ENCODE measurements at regions of chr17 and their contacts with region 1.

Region 1: DNA sequence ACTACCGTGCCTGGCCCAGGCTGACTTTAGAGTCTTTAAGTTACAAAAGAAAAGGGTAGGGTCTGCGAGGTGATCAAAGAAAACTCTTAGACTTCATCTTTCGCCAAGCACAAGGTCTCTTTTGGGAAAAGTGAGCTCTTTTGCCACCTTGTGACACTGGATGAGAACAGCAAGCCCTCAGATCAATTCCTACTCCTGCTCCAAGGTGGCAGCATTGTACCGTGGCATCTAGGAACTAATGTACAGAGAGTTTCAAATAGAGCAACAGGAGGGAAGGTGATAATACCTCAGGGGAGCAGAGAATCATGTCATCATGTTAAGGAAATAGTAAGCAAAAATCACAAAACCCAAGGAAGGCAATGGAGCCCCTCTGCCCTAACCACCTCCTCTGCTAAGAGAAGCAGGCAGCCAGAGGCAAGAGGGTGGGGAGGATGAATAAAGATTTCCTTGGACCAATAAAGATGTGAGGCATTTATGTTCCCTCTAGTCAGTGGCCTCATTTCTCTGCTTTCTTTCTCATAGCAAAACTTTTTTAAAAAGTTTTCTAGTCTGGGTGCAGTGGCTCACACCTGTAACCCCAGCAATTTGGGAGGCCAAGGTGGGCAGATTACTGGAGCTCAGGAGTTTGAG is 2.1 kb upstream of the C17orf78 start:
- DNase-seq: peak; percentile 76
- ATAC-seq: peak; percentile 98
- H3K4me3 ChIP-seq: no peak overlapping the region
- H3K27ac ChIP-seq: no peak overlapping the region
- H3K4me1 ChIP-seq: peaks cover 0 to 5% of the 10 kb centered on the region in 2 experiments; a peak in 2 of 4 replicates
- H3K27me3 ChIP-seq: no peaks in the 10 kb centered on the region
- CTCF ChIP-seq: peak; percentile 99 to 100 (median 100)
- POLR2A ChIP-seq: no peak
- RAD21 ChIP-seq: peak; percentile 99

Region 2: GRCh38 chr17:37276527-37276926 is 97.1 kb before region 1 on chr17:
- CTCF ChIA-PET with region 1: no interaction called
- POLR2A ChIA-PET with region 1: no interaction called
- RAD21 ChIA-PET with region 1: no interaction called
- intact Hi-C with region 1: no loop called
- DNase-seq: no peak
- ATAC-seq: no peak
- H3K4me3 ChIP-seq: no peak overlapping the region
- H3K27ac ChIP-seq: peak overlapping the region; percentile 16; the same call in 1 of the 2 replicates
- H3K4me1 ChIP-seq: peaks cover 10 to 24% of the 10 kb centered on the region in 2 experiments; a peak in 3 of 4 replicates
- H3K27me3 ChIP-seq: no peaks in the 10 kb centered on the region
- CTCF ChIP-seq: no peak
- POLR2A ChIP-seq: no peak
- RAD21 ChIP-seq: no peak

Region 3: DNA sequence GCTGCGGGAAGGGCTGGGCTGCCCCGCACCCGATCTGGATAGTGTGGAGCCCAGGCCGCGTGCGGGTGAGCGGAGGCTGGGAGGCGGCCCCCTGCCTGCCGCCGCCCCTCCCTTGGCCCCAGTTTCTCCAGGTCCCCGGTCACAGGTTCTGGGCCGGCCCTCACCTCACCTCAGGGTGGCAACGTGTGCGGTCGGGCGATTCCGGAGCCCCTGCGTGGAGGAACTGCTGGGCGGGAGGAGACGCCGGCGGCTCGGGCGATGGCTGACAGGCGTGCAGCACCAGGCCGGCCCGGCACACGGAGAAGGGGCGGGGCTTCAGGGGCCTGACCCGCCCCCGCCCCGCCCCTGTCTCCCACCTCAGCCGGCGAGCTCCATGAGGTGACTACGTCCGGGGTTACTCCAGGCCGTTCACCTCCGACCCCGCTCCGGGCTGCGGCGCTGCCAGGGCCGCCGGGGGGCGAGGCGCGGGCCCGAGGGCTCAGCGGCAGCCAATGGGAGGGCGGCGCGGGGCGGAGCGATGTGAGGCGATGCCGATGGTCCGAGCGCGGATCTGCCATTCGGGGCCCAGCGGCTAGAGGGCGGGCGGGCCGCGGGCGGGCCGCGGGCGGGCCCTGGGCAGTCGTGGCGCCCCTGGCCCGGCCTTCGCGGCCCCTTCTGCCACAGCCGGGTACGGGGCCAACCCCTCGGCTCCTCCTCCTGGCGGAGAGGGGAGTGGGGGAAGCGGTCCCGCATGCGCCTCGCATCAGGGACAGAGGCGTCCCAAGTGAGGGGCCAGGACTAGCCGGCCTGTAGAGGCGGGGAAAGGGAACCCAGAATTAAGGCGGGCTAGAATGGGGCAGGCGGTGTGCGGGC is 14.6 kb before region 1 on chr17:
- CTCF ChIA-PET with region 1: interaction called, 32 read pairs
- POLR2A ChIA-PET with region 1: interaction called, 11 read pairs
- RAD21 ChIA-PET with region 1: no interaction called
- intact Hi-C with region 1: no loop called
- DNase-seq: peak; percentile 86
- ATAC-seq: peak; percentile 95
- H3K4me3 ChIP-seq: peak overlapping the region; percentile 93 to 96
- H3K27ac ChIP-seq: peak overlapping the region; percentile 86
- H3K4me1 ChIP-seq: peaks cover 29 to 32% of the 10 kb centered on the region in 2 experiments
- H3K27me3 ChIP-seq: no peaks in the 10 kb centered on the region
- CTCF ChIP-seq: no peak
- POLR2A ChIP-seq: peak; percentile 25
- RAD21 ChIP-seq: no peak

Region 4: GRCh38 chr17:37392024-37392590 is 18.5 kb after region 1 on chr17:
- CTCF ChIA-PET with region 1: interaction called, 19 read pairs
- POLR2A ChIA-PET with region 1: interaction called, 3 read pairs
- RAD21 ChIA-PET with region 1: no interaction called
- intact Hi-C with region 1: loop called (anchors 1 kb)
- DNase-seq: no peak
- ATAC-seq: no peak
- H3K4me3 ChIP-seq: no peak overlapping the region
- H3K27ac ChIP-seq: no peak overlapping the region
- H3K4me1 ChIP-seq: peaks cover 0 to 10% of the 10 kb centered on the region in 2 experiments; a peak in 2 of 4 replicates
- H3K27me3 ChIP-seq: no peaks in the 10 kb centered on the region
- CTCF ChIP-seq: no peak
- POLR2A ChIP-seq: no peak
- RAD21 ChIP-seq: no peak

Region 5: DNA sequence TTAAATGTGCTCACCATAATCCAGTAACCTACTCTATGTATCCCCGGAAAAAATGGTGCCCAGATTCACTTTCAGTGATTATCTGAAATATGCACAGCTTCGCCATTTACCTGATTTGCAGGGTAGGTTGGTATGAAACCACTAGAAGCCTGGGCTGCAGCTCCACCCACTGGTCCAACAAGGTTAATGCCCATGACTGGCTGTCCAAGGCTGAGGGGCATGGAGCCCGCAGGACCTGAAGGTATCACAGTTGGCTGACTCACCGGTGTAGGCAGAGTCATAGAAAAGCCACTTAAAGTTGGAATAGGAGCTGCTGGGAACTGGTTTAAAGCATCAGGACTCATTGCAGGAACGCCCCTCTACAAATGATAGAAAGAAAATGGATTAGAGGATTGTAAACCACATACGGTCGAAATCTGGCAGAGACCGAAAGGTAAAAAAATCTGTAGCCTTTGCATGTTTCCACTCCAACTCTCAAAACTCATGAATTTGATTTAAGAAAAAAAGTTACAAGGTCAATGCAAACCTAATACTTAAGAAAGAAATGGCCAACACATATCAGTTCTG is 197.0 kb after region 1 on chr17:
- CTCF ChIA-PET with region 1: interaction called, 3 read pairs
- POLR2A ChIA-PET with region 1: no interaction called
- RAD21 ChIA-PET with region 1: interaction called in 1 of 2 experiments, 3 read pairs
- intact Hi-C with region 1: loop called (anchors 1 kb)
- DNase-seq: peak; percentile 34
- ATAC-seq: peak; percentile 99
- H3K4me3 ChIP-seq: no peak overlapping the region
- H3K27ac ChIP-seq: no peak overlapping the region
- H3K4me1 ChIP-seq: peaks cover 0 to 6% of the 10 kb centered on the region in 2 experiments; a peak in 1 of 4 replicates
- H3K27me3 ChIP-seq: no peaks in the 10 kb centered on the region
- CTCF ChIP-seq: peak; percentile 57 to 81 (median 75); a peak in 5 of 6 replicates
- POLR2A ChIP-seq: no peak
- RAD21 ChIP-seq: peak; percentile 76

Region 6: GRCh38 chr17:37744961-37745800 is 371.5 kb after region 1 on chr17 and contains the start of gene HNF1B:
- CTCF ChIA-PET with region 1: no interaction called
- POLR2A ChIA-PET with region 1: no interaction called
- RAD21 ChIA-PET with region 1: no interaction called
- intact Hi-C with region 1: no loop called
- DNase-seq: no peak
- ATAC-seq: peak; percentile 24; the same call in 1 of the 2 replicates
- H3K4me3 ChIP-seq: peak within 1 kb of the TSS; percentile 54 to 62
- H3K27ac ChIP-seq: peak within 1 kb of the TSS; percentile 76
- H3K4me1 ChIP-seq: peaks cover 0 to 7% of the 10 kb centered on the region in 2 experiments; a peak in 2 of 4 replicates
- H3K27me3 ChIP-seq: no peaks in the 10 kb centered on the region
- CTCF ChIP-seq: no peak
- POLR2A ChIP-seq: no peak
- RAD21 ChIP-seq: no peak
- total RNA-seq, gene HNF1B: 3.6 TPM